Calu3 (cell line): ENCODE measurements at regions of chr5 and their contacts with region 1.

Region 1: DNA sequence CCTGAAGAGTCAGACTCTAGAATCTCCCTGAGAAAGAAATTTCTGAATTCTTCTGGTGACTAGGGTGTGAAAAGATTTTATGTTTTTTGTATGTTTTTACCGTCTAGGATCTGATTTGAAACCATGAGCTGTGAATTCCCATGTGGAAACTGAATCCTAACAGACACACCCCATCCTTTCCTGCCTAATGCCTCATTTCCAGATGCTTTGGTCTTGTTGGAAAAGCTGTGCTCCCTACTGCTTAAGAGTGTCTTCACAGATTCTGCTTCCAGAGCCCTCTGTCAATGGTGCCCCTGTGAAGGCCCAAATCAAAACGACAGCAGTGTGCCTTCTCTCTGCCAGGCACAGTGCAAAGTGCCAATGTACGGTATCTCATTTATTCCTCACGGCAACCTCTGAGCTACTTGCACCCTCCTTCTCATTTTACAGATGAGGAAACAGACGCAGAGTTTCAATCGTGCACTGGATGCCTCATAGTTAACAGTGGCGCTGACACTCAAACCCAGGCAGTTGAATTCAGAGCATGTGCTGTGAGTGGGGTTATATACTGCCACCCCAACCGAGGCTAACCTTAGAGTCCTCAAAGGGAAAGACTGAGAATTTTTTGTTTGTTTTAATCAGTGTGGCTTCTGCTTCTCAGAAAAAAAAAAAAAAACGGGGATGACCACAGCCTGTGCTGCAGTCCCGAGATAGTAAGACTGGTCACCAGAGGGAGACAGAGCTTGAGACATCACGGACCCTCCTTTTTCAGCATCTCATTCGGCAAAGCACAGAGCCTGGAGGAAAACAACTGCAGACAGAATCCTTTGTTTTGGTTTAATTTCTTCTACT is 188.4 kb downstream of the SNCAIP start:
- DNase-seq: peak; percentile 50
- H3K4me3 Mint-ChIP-seq: no peak overlapping the region
- H3K27ac Mint-ChIP-seq: no peak overlapping the region
- H3K4me1 Mint-ChIP-seq: no peaks in the 10 kb centered on the region
- H3K27me3 Mint-ChIP-seq: no peaks in the 10 kb centered on the region
- CTCF ChIP-seq: peak; percentile 40

Region 2: DNA sequence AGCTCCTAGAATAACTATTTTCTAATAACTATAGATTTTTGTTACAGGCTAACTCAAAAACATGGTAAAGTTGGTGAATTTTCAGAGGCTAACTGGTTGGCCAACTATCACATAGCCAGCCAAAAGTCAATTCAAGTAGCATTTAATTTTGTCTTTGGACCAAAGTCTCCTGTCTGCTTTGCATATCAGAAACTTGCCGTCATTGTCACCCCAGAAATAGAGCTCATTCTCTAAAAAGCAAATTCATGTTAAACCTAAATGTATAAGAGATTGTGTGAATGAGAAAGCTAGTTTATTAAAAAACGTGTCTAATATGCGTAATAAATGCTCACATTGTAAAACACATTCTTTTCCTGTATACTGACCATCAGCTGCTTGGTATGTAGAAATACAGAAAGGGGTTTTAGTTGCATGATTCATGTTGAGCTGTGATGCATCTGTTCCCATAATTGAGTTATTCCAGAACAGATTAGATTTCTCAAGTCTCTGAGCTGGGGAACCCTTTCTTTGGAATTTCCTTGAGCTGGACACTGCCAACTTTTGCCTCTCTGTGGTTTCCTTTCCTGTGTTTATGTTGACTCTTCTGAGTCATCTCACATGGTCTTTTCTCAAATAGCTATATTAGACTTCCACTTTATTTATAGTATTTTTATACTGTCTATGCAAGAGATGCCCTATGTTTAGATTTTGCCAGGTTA is 531.4 kb before region 1 on chr5:
- CTCF ChIA-PET with region 1: no interaction called
- intact Hi-C with region 1: loop called (anchors 10 kb)
- DNase-seq: peak; percentile 59
- H3K4me3 Mint-ChIP-seq: peak overlapping the region; percentile 22
- H3K27ac Mint-ChIP-seq: peak overlapping the region; percentile 81
- H3K4me1 Mint-ChIP-seq: peaks cover 26% of the 10 kb centered on the region
- H3K27me3 Mint-ChIP-seq: no peaks in the 10 kb centered on the region
- CTCF ChIP-seq: no peak

Region 3: GRCh38 chr5:122458278-122458872 is 42.1 kb before region 1 on chr5:
- CTCF ChIA-PET with region 1: no interaction called
- intact Hi-C with region 1: loop called (anchors 1 kb)
- DNase-seq: peak; percentile 36
- H3K4me3 Mint-ChIP-seq: no peak overlapping the region
- H3K27ac Mint-ChIP-seq: no peak overlapping the region
- H3K4me1 Mint-ChIP-seq: peaks cover 9% of the 10 kb centered on the region
- H3K27me3 Mint-ChIP-seq: no peaks in the 10 kb centered on the region
- CTCF ChIP-seq: peak; percentile 55

Region 4: GRCh38 chr5:123089914-123090670 is 589.6 kb after region 1 on chr5:
- CTCF ChIA-PET with region 1: no interaction called
- intact Hi-C with region 1: loop called (anchors 5 kb)
- DNase-seq: peak; percentile 54
- H3K4me3 Mint-ChIP-seq: peak overlapping the region; percentile 76
- H3K27ac Mint-ChIP-seq: no peak overlapping the region
- H3K4me1 Mint-ChIP-seq: peaks cover 34% of the 10 kb centered on the region
- H3K27me3 Mint-ChIP-seq: peaks cover 96% of the 10 kb centered on the region
- CTCF ChIP-seq: no peak

Region 5: GRCh38 chr5:123367739-123368138 is 867.3 kb after region 1 on chr5:
- CTCF ChIA-PET with region 1: no interaction called
- intact Hi-C with region 1: loop called (anchors 2 kb)
- DNase-seq: no peak
- H3K4me3 Mint-ChIP-seq: no peak overlapping the region
- H3K27ac Mint-ChIP-seq: no peak overlapping the region
- H3K4me1 Mint-ChIP-seq: no peaks in the 10 kb centered on the region
- H3K27me3 Mint-ChIP-seq: no peaks in the 10 kb centered on the region
- CTCF ChIP-seq: peak; percentile 30

Region 6: GRCh38 chr5:123610665-123611405 is 1110.4 kb after region 1 on chr5:
- CTCF ChIA-PET with region 1: no interaction called
- intact Hi-C with region 1: loop called (anchors 1 kb)
- DNase-seq: peak; percentile 55
- H3K4me3 Mint-ChIP-seq: no peak overlapping the region
- H3K27ac Mint-ChIP-seq: no peak overlapping the region
- H3K4me1 Mint-ChIP-seq: no peaks in the 10 kb centered on the region
- H3K27me3 Mint-ChIP-seq: no peaks in the 10 kb centered on the region
- CTCF ChIP-seq: peak; percentile 82

Region 7: GRCh38 chr5:123665822-123666371 is 1165.4 kb after region 1 on chr5:
- CTCF ChIA-PET with region 1: no interaction called
- intact Hi-C with region 1: loop called (anchors 2 kb)
- DNase-seq: no peak
- H3K4me3 Mint-ChIP-seq: no peak overlapping the region
- H3K27ac Mint-ChIP-seq: no peak overlapping the region
- H3K4me1 Mint-ChIP-seq: no peaks in the 10 kb centered on the region
- H3K27me3 Mint-ChIP-seq: peaks cover 2% of the 10 kb centered on the region
- CTCF ChIP-seq: peak; percentile 39